ENCODE measurements at regions of chr22 and their contacts with region 1.

Region 1: GRCh38 chr22:17368554-17369438 is 464 bp upstream of the CECR2 start:
- DNase-seq: peak; percentile 58 to 78 (median 67)
- ATAC-seq: peak; percentile 52 to 80 (median 74)
- H3K4me3 ChIP-seq: peak overlapping the region; percentile 41 to 81 (median 75)
- H3K27ac ChIP-seq: peak overlapping the region; percentile 51 to 90 (median 84)
- H3K4me1 ChIP-seq: peaks cover 0 to 26% (median 11%) of the 10 kb centered on the region in 12 donors
- H3K27me3 ChIP-seq: peaks cover 0 to 66% (median 3%) of the 10 kb centered on the region in 9 donors
- CTCF ChIP-seq: peak in 1 of 12 donors; percentile 7
- POLR2A ChIP-seq: peak in 1 of 2 donors; percentile 12

Region 2: GRCh38 chr22:17213976-17214375 is 154.8 kb before region 1 on chr22:
- intact Hi-C with region 1: loop called in 3 of 10 experiments (anchors 10 kb)
- DNase-seq: peak; percentile 63 to 77 (median 69)
- ATAC-seq: peak in 3 of 4 donors; percentile 52 to 79 (median 63)
- H3K4me3 ChIP-seq: no peak overlapping the region
- H3K27ac ChIP-seq: no peak overlapping the region
- H3K4me1 ChIP-seq: peaks cover 0 to 27% (median 0%) of the 10 kb centered on the region in 12 donors
- H3K27me3 ChIP-seq: no peaks in the 10 kb centered on the region
- CTCF ChIP-seq: peak; percentile 29 to 61 (median 48)
- POLR2A ChIP-seq: no peak

Region 3: GRCh38 chr22:17319546-17319945 is 49.2 kb before region 1 on chr22:
- intact Hi-C with region 1: no loop called
- DNase-seq: no peak
- ATAC-seq: no peak
- H3K4me3 ChIP-seq: no peak overlapping the region
- H3K27ac ChIP-seq: no peak overlapping the region
- H3K4me1 ChIP-seq: no peaks in the 10 kb centered on the region
- H3K27me3 ChIP-seq: peaks cover 0 to 5% (median 0%) of the 10 kb centered on the region in 9 donors
- CTCF ChIP-seq: no peak
- POLR2A ChIP-seq: no peak

Region 4: GRCh38 chr22:17436382-17436980 is 67.7 kb after region 1 on chr22:
- intact Hi-C with region 1: loop called in 1 of 10 experiments (anchors 10 kb)
- DNase-seq: no peak
- ATAC-seq: peak; percentile 42 to 55 (median 44)
- H3K4me3 ChIP-seq: peak overlapping the region in 1 of 12 donors; percentile 3
- H3K27ac ChIP-seq: peak overlapping the region in 3 of 12 donors; percentile 9 to 37 (median 9)
- H3K4me1 ChIP-seq: peaks cover 0 to 29% (median 9%) of the 10 kb centered on the region in 12 donors
- H3K27me3 ChIP-seq: no peaks in the 10 kb centered on the region
- CTCF ChIP-seq: peak in 3 of 12 donors; percentile 12 to 13 (median 13)
- POLR2A ChIP-seq: no peak

Region 5: GRCh38 chr22:17492247-17492646 is 123.5 kb after region 1 on chr22:
- intact Hi-C with region 1: loop called in 3 of 10 experiments (anchors 5 kb)
- DNase-seq: peak in 2 of 5 donors; percentile 39 to 54
- ATAC-seq: peak; percentile 80 to 85 (median 81)
- H3K4me3 ChIP-seq: no peak overlapping the region
- H3K27ac ChIP-seq: peak overlapping the region in 8 of 12 donors; percentile 6 to 62 (median 25)
- H3K4me1 ChIP-seq: peaks cover 0 to 19% (median 8%) of the 10 kb centered on the region in 12 donors
- H3K27me3 ChIP-seq: no peaks in the 10 kb centered on the region
- CTCF ChIP-seq: no peak
- POLR2A ChIP-seq: no peak

Measured in heart left ventricle (tissue), 16 donors.